HEK293T (cell line): ENCODE measurements at regions of chr17 and their contacts with region 1.

Region 1: GRCh38 chr17:44123356-44124117 is at the start of gene HDAC5:
- DNase-seq: peak; percentile 95

Region 2: GRCh38 chr17:44059101-44059892 is 64.2 kb before region 1 on chr17:
- CTCF ChIA-PET with region 1: no interaction called
- POLR2A ChIA-PET with region 1: no interaction called
- DNase-seq: no peak

Region 3: DNA sequence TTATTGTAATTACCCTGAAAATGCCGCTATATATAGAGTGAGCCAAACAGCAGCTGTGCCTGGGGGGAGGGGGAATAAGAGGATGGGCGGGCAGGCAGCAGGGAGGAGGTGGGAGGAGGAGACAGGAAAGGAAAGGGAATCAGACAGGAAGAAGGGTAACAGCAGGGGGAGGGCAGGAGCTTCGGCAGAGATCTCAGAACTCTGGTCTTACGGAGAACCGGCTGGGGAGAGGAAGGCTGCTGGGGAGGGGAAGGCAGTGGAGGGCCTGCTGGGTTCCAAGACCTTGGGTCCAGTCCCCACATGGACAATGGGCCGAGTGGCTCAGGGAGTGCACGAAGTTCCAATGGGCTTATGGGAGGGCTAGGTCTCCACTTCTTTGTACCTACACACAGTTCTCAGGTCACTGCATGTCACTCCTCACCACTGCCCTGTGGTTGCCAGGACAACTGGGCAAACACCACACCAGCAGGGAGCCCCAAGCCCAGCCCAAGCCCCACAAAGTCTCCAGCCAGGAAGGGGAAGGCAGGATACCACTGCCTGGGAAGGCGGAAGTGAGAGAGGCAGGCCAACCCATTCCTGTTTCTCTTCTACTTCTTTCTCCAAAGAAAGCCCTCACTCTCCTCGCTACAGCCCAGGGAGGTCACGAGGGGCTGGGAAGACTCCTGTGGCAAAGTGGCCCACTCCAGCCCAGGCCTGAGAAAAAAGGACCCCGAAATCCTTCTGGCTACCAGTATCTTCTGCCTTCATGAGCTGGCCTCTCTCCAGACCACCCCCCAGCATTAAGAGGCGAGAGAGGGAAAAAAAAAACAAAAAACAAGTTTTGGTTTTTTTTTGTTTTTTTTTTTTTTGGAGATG is 27.7 kb before region 1 on chr17:
- CTCF ChIA-PET with region 1: interaction called, 5 read pairs
- POLR2A ChIA-PET with region 1: interaction called, 20 read pairs
- DNase-seq: peak; percentile 70

Region 4: DNA sequence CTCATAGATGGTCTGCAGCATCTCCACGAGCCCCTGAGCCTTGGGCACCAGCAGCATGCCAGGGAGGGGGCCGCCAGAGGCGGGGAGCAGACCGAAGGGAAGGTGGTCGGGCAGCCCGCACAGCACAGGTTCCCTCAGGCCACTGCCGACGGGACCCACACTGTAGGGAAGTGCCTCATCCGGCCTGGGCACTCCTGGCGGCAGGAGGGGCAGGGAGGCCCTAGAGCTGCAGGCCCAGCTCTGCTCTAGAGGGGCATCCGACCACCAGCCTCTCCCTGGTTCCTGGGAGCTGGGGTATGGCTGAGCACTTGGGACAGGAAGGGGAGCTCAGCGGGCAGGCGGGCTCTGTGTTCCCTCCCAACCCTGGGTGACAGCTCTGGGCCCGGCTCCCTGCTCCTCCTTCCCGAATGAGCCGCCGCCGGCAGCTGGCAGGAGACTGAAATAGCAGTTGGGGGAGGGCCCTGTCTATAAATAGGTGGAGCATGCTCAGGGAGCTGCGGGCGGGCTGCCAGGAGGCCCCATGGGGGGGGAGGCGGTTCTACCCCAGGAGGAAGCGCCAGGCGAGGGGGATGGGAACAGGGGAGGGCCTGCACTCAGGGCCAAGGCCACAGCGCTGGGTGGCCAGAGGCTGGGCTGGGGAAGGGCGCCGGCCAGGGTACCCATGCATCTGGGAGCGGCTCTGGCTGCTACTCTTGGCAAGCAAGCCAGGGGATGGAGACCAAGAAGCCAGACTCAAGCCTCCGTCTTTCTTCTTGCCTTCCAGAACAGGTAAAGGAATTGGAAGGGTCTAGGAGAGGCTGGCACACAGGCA is 12.5 kb before region 1 on chr17:
- CTCF ChIA-PET with region 1: interaction called, 11 read pairs
- POLR2A ChIA-PET with region 1: interaction called, 14 read pairs
- DNase-seq: peak; percentile 77

Region 5: GRCh38 chr17:44137891-44138709 is 14.6 kb after region 1 on chr17:
- CTCF ChIA-PET with region 1: interaction called, 6 read pairs
- POLR2A ChIA-PET with region 1: interaction called, 16 read pairs
- DNase-seq: peak; percentile 78